ENCODE measurements at regions of chr12 and their contacts with region 1.

Region 1: GRCh38 chr12:15899282-15899870 is 11.8 kb upstream of the DERA start:
- DNase-seq: no peak
- H3K4me3 Mint-ChIP-seq: no peak overlapping the region
- H3K27ac Mint-ChIP-seq: no peak overlapping the region
- H3K4me1 Mint-ChIP-seq: peaks cover 12% of the 10 kb centered on the region
- H3K27me3 Mint-ChIP-seq: no peaks in the 10 kb centered on the region

Region 2: DNA sequence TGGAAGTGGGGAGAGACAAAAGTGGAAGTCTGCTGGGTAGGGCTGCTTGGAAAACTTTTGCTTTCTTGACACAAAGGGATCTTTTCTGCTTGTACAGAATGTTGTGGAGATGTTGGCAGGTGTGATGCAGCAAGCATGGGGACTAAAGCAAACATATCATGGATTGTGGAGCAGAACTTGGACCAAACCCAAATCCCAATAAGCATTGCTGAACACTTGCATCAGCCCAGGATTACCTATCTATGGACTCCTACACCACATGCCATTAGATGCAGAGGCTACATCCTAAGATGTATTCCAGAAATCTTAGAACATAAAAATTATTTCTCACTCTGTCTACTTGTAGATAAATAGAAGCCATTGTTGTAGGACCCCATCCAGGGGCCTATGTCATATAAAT is 633.5 kb before region 1 on chr12:
- intact Hi-C with region 1: no loop called
- DNase-seq: no peak
- H3K4me3 Mint-ChIP-seq: no peak overlapping the region
- H3K27ac Mint-ChIP-seq: no peak overlapping the region
- H3K4me1 Mint-ChIP-seq: no peaks in the 10 kb centered on the region
- H3K27me3 Mint-ChIP-seq: peaks cover 7% of the 10 kb centered on the region

Region 3: DNA sequence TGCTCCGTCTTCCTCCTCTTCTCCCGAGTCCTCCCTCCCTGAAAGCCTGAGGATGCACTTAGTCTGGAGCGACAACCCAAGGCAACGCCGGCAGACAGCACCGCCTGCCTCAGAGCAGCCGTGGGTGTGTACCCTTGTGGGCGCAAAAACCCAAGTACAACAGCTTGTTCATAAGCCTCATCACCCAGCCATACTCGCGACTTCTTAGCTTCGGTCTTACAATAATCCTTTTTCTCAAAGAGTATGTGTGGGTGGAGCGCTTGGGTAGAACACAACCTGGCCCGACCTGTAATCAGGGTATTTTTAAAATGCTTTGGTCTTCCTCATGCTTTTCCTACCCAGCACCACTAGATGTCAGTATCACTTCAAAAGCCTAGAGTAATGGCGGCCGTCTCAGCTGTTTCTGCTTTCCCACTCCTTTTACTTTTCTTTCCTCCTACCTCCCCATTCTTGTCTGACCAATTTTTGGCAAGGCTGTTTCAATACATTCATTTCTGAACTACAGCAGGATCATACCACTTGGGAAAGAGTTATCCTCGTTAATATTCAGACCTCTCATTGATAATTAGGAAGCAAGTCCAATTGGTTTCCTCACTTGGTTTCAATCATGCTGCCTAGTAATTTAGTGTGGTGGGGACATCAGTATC is 309.1 kb before region 1 on chr12:
- intact Hi-C with region 1: loop called (anchors 1 kb)
- DNase-seq: peak; percentile 42
- H3K4me3 Mint-ChIP-seq: peak overlapping the region; percentile 72
- H3K27ac Mint-ChIP-seq: no peak overlapping the region
- H3K4me1 Mint-ChIP-seq: peaks cover 9% of the 10 kb centered on the region
- H3K27me3 Mint-ChIP-seq: no peaks in the 10 kb centered on the region

Region 4: GRCh38 chr12:15910864-15911721 is 11.7 kb after region 1 on chr12 and contains the start of gene DERA:
- intact Hi-C with region 1: loop called (anchors 1 kb)
- DNase-seq: peak; percentile 54
- H3K4me3 Mint-ChIP-seq: peak within 1 kb of the TSS; percentile 87
- H3K27ac Mint-ChIP-seq: peak within 1 kb of the TSS; percentile 90
- H3K4me1 Mint-ChIP-seq: peaks cover 25% of the 10 kb centered on the region
- H3K27me3 Mint-ChIP-seq: no peaks in the 10 kb centered on the region
- total RNA-seq, gene DERA: 15.3 and 17.1 TPM in 2 replicates

Region 5: DNA sequence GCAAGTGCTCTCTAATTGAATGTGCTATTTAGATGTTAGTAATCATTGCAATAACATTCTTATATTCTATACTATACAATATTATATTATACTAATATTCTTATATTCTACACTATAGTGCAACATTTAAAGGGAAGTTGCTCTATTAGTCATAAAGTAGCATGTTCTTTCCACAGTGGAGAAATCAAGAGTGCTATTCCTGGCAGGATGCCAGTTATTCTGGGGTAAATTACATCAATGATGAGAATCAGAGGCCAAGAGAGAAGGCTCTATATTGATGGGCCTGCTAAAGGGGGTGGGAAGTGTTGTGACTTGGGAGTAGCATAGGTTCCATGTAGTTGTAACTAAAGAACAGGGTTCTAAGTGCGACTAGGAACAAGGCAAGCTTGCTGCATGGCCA is 256.6 kb after region 1 on chr12:
- intact Hi-C with region 1: no loop called
- DNase-seq: no peak
- H3K4me3 Mint-ChIP-seq: no peak overlapping the region
- H3K27ac Mint-ChIP-seq: no peak overlapping the region
- H3K4me1 Mint-ChIP-seq: no peaks in the 10 kb centered on the region
- H3K27me3 Mint-ChIP-seq: peaks cover 2% of the 10 kb centered on the region